ENCODE measurements at regions of chr5 and their contacts with region 1.

Region 1: DNA sequence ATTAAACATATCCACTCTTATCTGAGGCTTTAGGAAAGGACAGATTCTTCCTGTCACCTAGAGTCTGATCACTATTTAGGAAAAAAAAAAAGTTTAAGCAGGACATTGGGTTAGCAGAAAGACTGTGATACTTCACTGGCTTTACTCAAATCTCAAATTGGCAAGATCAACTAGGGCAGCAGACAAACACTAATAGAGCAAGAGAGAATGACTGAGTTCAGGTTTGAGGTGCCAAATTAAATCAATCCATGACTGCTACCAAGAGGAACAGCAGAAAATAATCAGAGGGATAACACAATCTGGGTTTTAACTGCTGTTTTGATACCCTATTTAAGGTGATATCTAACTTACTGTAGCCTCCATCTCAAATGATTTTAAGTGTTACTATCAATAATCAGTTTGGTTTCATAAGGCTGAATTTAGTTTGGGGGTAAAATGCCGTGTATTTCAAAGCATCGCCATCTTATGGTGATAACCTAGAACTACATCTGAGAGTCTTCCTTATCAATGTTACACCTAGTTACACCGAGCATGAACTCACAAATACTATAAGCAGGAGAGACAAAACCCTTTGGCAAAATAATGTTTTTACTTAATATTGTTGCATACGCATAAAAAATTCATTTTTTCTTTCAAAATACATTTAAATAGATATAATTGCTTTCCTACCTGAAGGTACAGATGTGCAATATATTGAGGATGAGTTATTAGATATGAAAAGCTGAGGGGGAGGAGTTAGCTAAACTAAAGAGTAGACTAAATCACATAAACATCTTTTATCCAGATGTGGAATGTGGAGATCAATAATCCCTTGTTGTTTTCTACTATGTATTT is 286.4 kb upstream of the CDH12 start:
- DNase-seq: no peak
- ATAC-seq: peak in 2 of 8 donors; percentile 47 to 55
- H3K4me3 ChIP-seq: no peak overlapping the region
- H3K27ac ChIP-seq: no peak overlapping the region
- H3K4me1 ChIP-seq: no peaks in the 10 kb centered on the region
- H3K27me3 ChIP-seq: no peaks in the 10 kb centered on the region
- CTCF ChIP-seq: peak in 7 of 9 donors; percentile 41 to 58 (median 47)

Region 2: DNA sequence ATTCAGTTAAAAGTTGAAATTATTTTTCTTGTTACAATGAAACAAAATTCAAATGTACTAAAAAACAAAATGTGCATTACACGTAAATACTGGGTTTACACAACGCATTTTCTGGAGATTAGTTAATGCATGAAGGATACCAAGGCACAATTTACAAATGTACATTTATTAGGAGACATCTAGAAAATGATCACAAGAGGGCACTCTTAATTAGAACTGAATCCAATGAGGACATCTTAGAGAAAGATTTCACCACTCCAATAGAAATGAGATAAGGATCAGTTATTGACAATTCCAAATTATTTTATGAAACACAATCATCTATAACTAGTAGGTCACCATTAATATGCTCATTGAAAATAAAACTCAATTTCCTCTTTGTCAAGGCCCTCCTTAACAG is 249.8 kb before region 1 on chr5:
- intact Hi-C with region 1: loop called in 8 of 10 experiments (anchors 1 to 5 kb)
- DNase-seq: no peak
- ATAC-seq: no peak
- H3K4me3 ChIP-seq: no peak overlapping the region
- H3K27ac ChIP-seq: no peak overlapping the region
- H3K4me1 ChIP-seq: no peaks in the 10 kb centered on the region
- H3K27me3 ChIP-seq: no peaks in the 10 kb centered on the region
- CTCF ChIP-seq: peak in 6 of 9 donors; percentile 17 to 44 (median 30)

Region 3: GRCh38 chr5:22896155-22896554 is 243.4 kb before region 1 on chr5:
- intact Hi-C with region 1: loop called in 5 of 10 experiments (anchors 5 kb)
- DNase-seq: no peak
- ATAC-seq: no peak
- H3K4me3 ChIP-seq: no peak overlapping the region
- H3K27ac ChIP-seq: no peak overlapping the region
- H3K4me1 ChIP-seq: no peaks in the 10 kb centered on the region
- H3K27me3 ChIP-seq: no peaks in the 10 kb centered on the region
- CTCF ChIP-seq: no peak

Region 4: DNA sequence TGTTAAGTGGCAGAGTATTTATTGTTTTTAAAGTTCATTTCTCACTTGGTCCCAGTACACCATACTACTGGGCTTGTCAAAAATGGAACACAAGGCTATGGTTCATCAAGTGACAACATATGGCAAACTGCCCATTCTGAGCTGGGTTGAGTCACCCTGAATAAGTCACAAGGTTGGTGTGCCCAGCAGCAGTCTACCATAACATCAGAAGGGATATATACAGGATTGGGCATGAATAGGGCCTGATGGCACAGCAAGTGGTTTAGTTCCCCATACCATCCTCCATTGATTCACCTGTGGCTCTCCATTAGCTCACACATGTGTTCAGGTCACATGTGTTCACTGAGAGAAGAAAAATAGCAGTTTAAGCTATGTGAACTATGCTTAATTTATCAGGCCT is 118.1 kb after region 1 on chr5:
- intact Hi-C with region 1: no loop called
- DNase-seq: no peak
- ATAC-seq: no peak
- H3K4me3 ChIP-seq: no peak overlapping the region
- H3K27ac ChIP-seq: no peak overlapping the region
- H3K4me1 ChIP-seq: no peaks in the 10 kb centered on the region
- H3K27me3 ChIP-seq: no peaks in the 10 kb centered on the region
- CTCF ChIP-seq: no peak